ENCODE measurements at regions of chr12 and their contacts with region 1.

Region 1: DNA sequence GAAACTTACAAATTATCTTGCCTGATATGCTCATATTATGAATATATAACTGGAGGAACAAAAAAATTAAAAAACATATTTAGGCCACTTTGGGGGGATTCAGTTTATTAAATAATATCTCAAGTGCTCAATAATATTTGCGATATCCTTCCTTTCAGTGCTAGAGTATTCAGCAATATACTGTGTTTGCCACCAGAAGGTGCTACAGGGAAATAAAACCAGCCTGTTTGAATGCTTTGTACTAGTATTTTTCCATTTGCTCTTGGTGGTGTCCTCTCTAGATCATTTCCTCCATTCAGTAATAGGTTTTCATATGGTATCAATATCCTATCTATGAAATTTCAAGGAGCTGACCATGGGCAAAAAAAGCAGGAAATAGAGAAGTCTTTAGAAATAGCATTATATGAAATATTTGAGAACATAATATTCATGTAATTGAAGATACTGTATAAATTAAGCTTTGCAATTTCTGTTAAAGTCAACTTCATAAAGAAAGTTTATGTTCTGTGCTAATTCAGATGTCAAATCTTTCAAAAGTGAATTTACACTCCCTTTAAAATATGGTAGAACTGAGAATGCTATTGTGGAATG is 106.2 kb upstream of the NAV3 start:
- DNase-seq: no peak
- H3K4me3 ChIP-seq: no peak overlapping the region
- H3K27ac ChIP-seq: no peak overlapping the region
- H3K27me3 ChIP-seq: no peaks in the 10 kb centered on the region
- CTCF ChIP-seq: peak in 54 of 56 donors; percentile 13 to 74 (median 53)

Region 2: DNA sequence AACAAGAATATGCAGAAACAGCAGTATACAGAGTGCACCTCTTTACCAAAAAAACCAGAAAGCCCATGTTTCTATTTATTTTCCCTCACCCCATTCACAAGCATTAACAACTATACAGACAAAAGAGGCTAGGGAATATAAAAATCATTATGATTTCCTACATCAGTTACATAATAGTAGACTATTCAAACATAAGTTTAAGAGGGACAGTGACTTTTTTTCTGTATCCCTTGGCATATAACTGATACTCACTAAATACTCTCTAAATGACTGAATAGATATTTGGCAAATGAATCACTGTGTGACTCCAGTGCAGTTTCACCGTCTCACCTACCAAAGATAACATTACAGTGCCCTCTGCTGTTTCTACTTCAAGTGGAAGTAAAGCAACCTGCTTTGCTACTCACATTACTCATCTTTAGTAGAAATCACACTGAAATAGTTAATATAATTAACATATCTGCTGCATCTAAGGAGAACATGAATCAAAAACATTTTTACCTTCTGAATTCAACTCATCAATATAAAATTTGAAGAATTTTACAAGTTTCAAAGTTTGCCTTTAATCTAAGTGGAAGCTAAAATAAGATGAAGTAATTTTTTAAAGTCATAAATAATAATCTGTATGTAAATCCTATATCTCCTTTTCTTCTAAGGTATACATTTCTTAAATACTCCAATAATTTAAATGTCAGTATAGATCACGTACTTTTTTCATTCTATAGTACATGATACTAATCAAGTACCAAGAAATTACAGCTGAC is 1268.7 kb before region 1 on chr12:
- intact Hi-C with region 1: no loop called
- DNase-seq: no peak
- H3K4me3 ChIP-seq: no peak overlapping the region
- H3K27ac ChIP-seq: peak overlapping the region in 1 of 59 donors; percentile 38
- H3K27me3 ChIP-seq: no peaks in the 10 kb centered on the region
- CTCF ChIP-seq: peak; percentile 20 to 75 (median 56)

Region 3: GRCh38 chr12:77925536-77926108 is 201.2 kb after region 1 on chr12:
- intact Hi-C with region 1: loop called (anchors 5 kb)
- DNase-seq: peak; percentile 41 to 87 (median 74)
- H3K4me3 ChIP-seq: peak overlapping the region in 45 of 59 donors; percentile 1 to 47 (median 28)
- H3K27ac ChIP-seq: peak overlapping the region in 9 of 59 donors; percentile 11 to 61 (median 17)
- H3K27me3 ChIP-seq: no peaks in the 10 kb centered on the region
- CTCF ChIP-seq: peak; percentile 80 to 100 (median 93)

Region 4: DNA sequence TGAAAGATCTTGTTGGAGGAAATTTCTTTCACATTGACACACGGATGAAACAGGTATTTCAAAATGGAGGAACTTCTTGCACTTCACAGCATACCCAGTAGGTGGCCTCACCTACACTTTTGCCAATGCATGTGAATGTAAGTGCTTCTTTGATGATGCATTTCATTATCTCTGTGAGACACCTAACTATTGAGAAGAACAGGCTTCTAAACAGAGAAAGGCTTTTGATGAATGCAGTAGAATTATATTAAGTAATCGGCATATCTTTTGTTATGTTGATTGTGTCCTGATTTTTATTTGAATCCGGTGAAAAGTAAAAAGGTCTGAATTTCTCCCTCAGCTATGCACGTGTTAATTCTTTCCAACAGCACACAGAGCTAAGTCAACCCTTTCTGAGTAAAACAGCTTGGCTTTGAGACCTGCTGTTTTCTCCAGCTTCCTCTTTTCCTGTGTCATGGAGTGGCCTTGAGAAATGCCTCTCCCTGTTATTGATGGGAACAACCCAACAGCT is 505.2 kb after region 1 on chr12:
- intact Hi-C with region 1: no loop called
- DNase-seq: no peak
- H3K4me3 ChIP-seq: no peak overlapping the region
- H3K27ac ChIP-seq: no peak overlapping the region
- H3K27me3 ChIP-seq: no peaks in the 10 kb centered on the region
- CTCF ChIP-seq: peak in 55 of 56 donors; percentile 16 to 65 (median 42)

Measured in dorsolateral prefrontal cortex (tissue), 120 donors.